ENCODE measurements at regions of chr6 and their contacts with region 1.

Region 1: GRCh38 chr6:56708810-56709597 is 66.3 kb upstream of the DST start:
- DNase-seq: no peak
- ATAC-seq: peak in 1 of 2 donors; percentile 21
- H3K4me3 ChIP-seq: no peak overlapping the region
- H3K27ac ChIP-seq: peak overlapping the region; percentile 16 to 37 (median 29)
- H3K4me1 ChIP-seq: peaks cover 43 to 44% of the 10 kb centered on the region in 2 donors
- H3K27me3 ChIP-seq: no peaks in the 10 kb centered on the region
- CTCF ChIP-seq: peak; percentile 59 to 79 (median 70)
- POLR2A ChIP-seq: no peak

Region 2: GRCh38 chr6:56757588-56757984 is 48.6 kb after region 1 on chr6:
- in situ Hi-C with region 1: loop called in 1 of 4 experiments (anchors 10 kb)
- intact Hi-C with region 1: loop called (anchors 5 kb)
- DNase-seq: no peak
- ATAC-seq: peak in 1 of 2 donors; percentile 43
- H3K4me3 ChIP-seq: no peak overlapping the region
- H3K27ac ChIP-seq: peak overlapping the region in 2 of 4 donors; percentile 1 to 9
- H3K4me1 ChIP-seq: peaks cover 55 to 57% of the 10 kb centered on the region in 2 donors
- H3K27me3 ChIP-seq: no peaks in the 10 kb centered on the region
- CTCF ChIP-seq: peak in 2 of 5 experiments; percentile 13 to 30
- POLR2A ChIP-seq: no peak

Region 3: DNA sequence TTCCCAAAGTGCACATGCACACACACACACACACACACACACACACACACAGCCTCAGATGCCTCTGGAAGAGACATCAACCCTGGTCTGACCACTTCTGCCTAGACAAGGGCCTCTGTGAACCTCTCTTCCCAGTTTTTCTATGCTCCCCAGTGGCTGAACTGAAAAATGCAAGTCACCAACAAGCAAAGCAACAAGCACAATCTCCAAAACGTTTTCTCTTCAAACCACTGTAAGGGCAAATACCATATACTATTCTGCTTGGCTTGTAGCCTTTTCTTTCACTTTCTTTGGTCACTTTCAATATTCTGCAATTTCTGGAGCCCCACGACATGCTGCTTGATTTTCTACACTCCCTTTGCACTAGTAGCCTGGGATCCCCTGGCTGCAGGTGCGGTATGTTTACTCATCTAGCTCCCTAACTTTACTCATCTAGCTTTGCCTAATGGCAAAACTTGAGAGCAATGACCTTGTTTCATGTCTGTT is 55.1 kb after region 1 on chr6:
- in situ Hi-C with region 1: loop called in 1 of 4 experiments (anchors 10 kb)
- intact Hi-C with region 1: loop called (anchors 5 kb)
- DNase-seq: no peak
- ATAC-seq: peak in 1 of 2 donors; percentile 79
- H3K4me3 ChIP-seq: no peak overlapping the region
- H3K27ac ChIP-seq: peak overlapping the region; percentile 6 to 88 (median 72)
- H3K4me1 ChIP-seq: peaks cover 54 to 73% of the 10 kb centered on the region in 2 donors
- H3K27me3 ChIP-seq: no peaks in the 10 kb centered on the region
- CTCF ChIP-seq: peak in 4 of 5 experiments; percentile 23 to 51 (median 40)
- POLR2A ChIP-seq: no peak

Region 4: DNA sequence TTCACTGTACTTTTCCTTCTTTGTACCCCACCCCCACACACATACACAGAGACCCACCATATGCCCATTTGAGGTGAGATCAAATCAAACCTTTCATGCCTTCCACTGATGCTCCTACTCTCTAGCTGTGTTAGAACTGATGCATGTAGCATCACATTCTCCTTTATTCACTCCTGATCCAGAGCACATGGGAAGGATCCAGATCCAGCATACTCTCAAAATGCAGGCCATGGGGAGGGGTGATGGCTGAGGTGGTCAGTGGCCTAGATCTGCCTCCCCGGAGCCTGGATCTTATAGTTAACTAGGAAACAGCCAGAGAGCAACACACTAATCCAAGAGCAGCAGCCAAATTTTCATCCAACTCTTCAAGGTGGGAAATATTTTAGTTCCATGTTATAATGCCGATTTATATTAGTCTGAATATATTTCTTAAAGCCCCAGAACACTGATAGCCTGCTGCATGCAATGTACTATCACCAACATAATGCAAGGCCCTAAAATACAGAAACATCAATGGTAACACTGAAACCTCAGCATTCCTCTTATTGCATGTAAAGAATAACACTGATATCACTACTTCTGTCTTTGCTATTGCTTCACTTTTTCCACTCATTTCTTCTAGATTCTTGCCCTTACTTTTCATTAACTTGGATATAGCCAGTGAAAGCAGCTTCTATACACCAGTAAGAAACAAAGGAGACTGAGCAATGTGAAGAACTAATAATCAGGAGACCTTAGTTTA is 119.1 kb after region 1 on chr6:
- in situ Hi-C with region 1: no loop called
- intact Hi-C with region 1: no loop called
- DNase-seq: no peak
- ATAC-seq: no peak
- H3K4me3 ChIP-seq: no peak overlapping the region
- H3K27ac ChIP-seq: peak overlapping the region; percentile 18 to 81 (median 30)
- H3K4me1 ChIP-seq: peaks cover 56 to 66% of the 10 kb centered on the region in 2 donors
- H3K27me3 ChIP-seq: no peaks in the 10 kb centered on the region
- CTCF ChIP-seq: no peak
- POLR2A ChIP-seq: no peak

Region 5: GRCh38 chr6:56851541-56852259 is 142.7 kb after region 1 on chr6:
- in situ Hi-C with region 1: loop called in 3 of 4 experiments (anchors 5 to 10 kb)
- intact Hi-C with region 1: loop called (anchors 1 kb)
- DNase-seq: peak in 1 of 2 donors; percentile 49
- ATAC-seq: peak; percentile 86 to 96
- H3K4me3 ChIP-seq: peak overlapping the region; percentile 51 to 52 (median 52)
- H3K27ac ChIP-seq: peak overlapping the region; percentile 14 to 51 (median 30)
- H3K4me1 ChIP-seq: peaks cover 8 to 19% of the 10 kb centered on the region in 2 donors
- H3K27me3 ChIP-seq: no peaks in the 10 kb centered on the region
- CTCF ChIP-seq: peak; percentile 58 to 71 (median 65)
- POLR2A ChIP-seq: no peak

Measured in gastrocnemius medialis (tissue), 4 donors.